ENCODE measurements at regions of chr1 and their contacts with region 1.

Region 1: DNA sequence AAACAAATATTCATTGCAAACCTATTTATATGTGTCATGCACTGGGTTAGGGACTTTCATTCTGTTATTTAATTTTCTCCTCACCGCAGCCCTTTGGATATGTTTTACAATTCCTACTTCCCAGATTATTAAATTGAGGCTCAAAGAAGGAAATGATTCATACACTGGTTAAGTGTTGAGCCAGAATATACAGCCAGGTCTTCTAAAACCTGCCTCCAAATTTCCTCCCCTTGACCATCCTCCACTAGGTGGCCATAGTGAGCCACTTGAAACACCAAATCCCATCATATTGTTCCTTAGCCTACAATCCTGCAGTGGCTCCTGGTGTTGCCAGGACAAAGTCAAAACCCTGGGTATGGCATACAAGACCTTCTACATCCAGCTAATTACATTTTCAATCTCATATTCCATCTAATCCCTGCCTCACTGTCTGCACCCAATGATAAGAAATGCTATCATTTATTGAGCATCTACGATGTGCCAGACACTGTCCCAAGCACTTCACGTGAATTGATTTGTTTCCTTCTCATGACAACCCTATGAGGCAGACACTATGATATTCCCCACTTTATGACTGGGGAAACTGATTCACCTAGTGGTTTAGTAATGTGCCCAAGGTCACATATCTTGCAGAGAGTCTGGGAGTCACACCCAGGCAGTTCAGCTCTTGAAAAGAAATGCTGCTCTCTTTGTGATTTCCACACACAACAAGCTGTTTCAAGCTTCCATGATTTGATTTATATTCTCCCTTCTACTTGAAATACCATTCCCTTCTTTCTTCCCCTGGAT is 23.6 kb upstream of the KIRREL1 start:
- DNase-seq: peak; percentile 95
- ATAC-seq: peak; percentile 80
- H3K4me3 ChIP-seq: peak overlapping the region; percentile 20; the same call in 1 of the 2 replicates
- H3K27ac ChIP-seq: peak overlapping the region; percentile 86
- H3K4me1 ChIP-seq: peaks cover 18% of the 10 kb centered on the region
- H3K27me3 ChIP-seq: 0 out of 2 replicates have a peak, but pooled peaks cover under 1% of the 10 kb centered on the region
- CTCF ChIP-seq: peak; percentile 97

Region 2: GRCh38 chr1:157348538-157349480 is 621.1 kb before region 1 on chr1:
- CTCF ChIA-PET with region 1: no interaction called
- POLR2A ChIA-PET with region 1: no interaction called
- intact Hi-C with region 1: no loop called
- DNase-seq: no peak
- ATAC-seq: no peak
- H3K4me3 ChIP-seq: no peak overlapping the region
- H3K27ac ChIP-seq: no peak overlapping the region
- H3K4me1 ChIP-seq: no peaks in the 10 kb centered on the region
- H3K27me3 ChIP-seq: peaks cover 21% of the 10 kb centered on the region
- CTCF ChIP-seq: no peak

Region 3: GRCh38 chr1:157849229-157849875 is 120.5 kb before region 1 on chr1:
- CTCF ChIA-PET with region 1: no interaction called
- POLR2A ChIA-PET with region 1: no interaction called
- intact Hi-C with region 1: no loop called
- DNase-seq: no peak
- ATAC-seq: no peak
- H3K4me3 ChIP-seq: no peak overlapping the region
- H3K27ac ChIP-seq: no peak overlapping the region
- H3K4me1 ChIP-seq: no peaks in the 10 kb centered on the region
- H3K27me3 ChIP-seq: peaks cover 39% of the 10 kb centered on the region
- CTCF ChIP-seq: no peak

Region 4: GRCh38 chr1:157910270-157910669 is 59.6 kb before region 1 on chr1:
- CTCF ChIA-PET with region 1: no interaction called
- POLR2A ChIA-PET with region 1: no interaction called
- intact Hi-C with region 1: no loop called
- DNase-seq: no peak
- ATAC-seq: no peak
- H3K4me3 ChIP-seq: no peak overlapping the region
- H3K27ac ChIP-seq: no peak overlapping the region
- H3K4me1 ChIP-seq: no peaks in the 10 kb centered on the region
- H3K27me3 ChIP-seq: peaks cover 18% of the 10 kb centered on the region
- CTCF ChIP-seq: no peak

Region 5: DNA sequence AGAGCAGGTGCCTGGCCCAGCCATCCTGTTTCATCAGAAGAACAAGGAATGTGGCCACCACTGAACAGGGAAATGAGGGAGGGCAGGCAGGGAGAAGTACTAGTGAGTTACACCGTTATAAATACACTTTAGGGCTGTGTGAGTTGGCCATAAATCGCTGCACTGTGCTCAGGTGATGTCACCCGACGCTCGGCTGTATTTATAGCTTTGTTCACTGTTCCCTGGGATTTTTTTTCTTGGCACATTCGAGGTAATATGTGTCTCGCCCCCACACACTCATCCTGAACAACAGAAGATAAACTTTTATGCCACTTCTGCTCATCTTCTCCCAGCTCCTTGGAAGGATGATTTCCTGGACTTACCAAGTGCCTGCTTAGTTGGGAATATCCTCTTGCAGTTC is 14.6 kb after region 1 on chr1:
- CTCF ChIA-PET with region 1: interaction called, 4 read pairs
- POLR2A ChIA-PET with region 1: no interaction called
- intact Hi-C with region 1: loop called (anchors 2 kb)
- DNase-seq: no peak
- ATAC-seq: peak; percentile 72
- H3K4me3 ChIP-seq: no peak overlapping the region
- H3K27ac ChIP-seq: no peak overlapping the region
- H3K4me1 ChIP-seq: no peaks in the 10 kb centered on the region
- H3K27me3 ChIP-seq: peaks cover 50% of the 10 kb centered on the region; the same call in 1 of the 2 replicates
- CTCF ChIP-seq: no peak

Region 6: DNA sequence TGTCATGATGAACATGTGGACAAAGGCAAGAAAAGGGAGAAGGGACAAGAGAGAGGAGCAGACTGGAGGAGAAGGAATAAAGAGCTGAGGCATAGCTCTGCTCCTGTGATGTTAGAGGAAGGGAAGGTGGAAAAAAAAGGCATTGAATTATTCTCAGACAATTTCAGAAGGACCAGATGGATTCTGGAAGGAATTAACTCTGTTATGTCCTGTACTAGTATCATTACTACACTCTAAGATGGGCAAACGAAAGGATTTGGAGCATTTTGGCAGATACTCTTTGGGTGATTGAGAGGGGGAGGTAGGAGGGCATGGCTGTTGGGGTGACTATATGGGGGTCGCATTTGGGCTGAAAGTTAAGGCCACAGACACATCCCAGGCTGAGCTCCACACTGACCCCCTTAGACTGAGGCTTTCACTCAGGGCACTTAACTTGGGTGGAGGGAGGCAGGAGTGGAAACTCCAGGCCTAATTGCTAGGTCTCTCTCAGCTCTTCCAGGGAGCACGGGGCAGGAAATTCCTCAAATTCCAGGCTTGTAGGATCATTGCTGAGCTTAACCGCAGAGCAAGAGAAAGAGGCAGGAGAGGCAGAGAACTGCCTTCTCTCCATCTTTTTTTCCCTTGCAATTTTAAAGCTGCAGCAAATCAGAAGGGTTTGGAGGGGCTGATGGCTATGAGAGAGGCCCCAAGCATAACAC is 49.4 kb after region 1 on chr1:
- CTCF ChIA-PET with region 1: no interaction called
- POLR2A ChIA-PET with region 1: no interaction called
- intact Hi-C with region 1: loop called (anchors 2 kb)
- DNase-seq: peak; percentile 96
- ATAC-seq: peak; percentile 93
- H3K4me3 ChIP-seq: peak overlapping the region; percentile 42
- H3K27ac ChIP-seq: peak overlapping the region; percentile 72
- H3K4me1 ChIP-seq: peaks cover 66% of the 10 kb centered on the region
- H3K27me3 ChIP-seq: no peaks in the 10 kb centered on the region
- CTCF ChIP-seq: no peak

Region 7: DNA sequence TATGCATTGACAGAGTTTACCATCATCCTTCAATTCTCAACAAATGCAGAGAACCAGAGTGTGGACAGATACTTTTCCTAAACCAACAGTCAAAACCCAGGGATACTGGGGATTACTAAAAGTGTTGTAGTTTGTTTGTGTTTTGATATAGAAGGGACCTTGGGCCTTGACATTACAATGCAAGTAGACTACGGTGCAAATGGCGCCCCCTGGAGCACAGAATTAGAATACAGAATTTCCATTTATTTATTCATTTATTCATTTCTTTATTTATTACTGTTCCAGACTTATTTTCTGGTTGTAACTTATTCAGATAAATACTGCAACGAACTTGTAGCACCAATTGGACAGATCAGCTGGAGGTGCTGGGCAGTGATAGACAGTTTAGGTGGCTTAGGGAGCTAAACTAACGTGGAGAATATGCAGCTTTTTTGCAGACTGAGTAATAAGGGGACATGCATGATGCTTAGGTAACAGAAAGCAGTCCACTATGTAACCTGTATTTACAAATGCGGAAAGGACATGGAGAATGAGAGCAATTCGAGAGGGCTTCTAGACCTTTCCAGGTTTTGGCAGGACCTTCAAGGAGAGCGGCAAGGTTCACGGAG is 66.2 kb after region 1 on chr1:
- CTCF ChIA-PET with region 1: interaction called, 4 read pairs
- POLR2A ChIA-PET with region 1: no interaction called
- intact Hi-C with region 1: loop called (anchors 1 kb)
- DNase-seq: peak; percentile 79
- ATAC-seq: peak; percentile 24; the same call in 1 of the 2 replicates
- H3K4me3 ChIP-seq: no peak overlapping the region
- H3K27ac ChIP-seq: no peak overlapping the region
- H3K4me1 ChIP-seq: peaks cover 22% of the 10 kb centered on the region
- H3K27me3 ChIP-seq: no peaks in the 10 kb centered on the region
- CTCF ChIP-seq: peak; percentile 96

Region 8: GRCh38 chr1:158087320-158087927 is 117.5 kb after region 1 on chr1:
- CTCF ChIA-PET with region 1: no interaction called
- POLR2A ChIA-PET with region 1: no interaction called
- intact Hi-C with region 1: loop called (anchors 1 kb)
- DNase-seq: peak; percentile 87
- ATAC-seq: peak; percentile 87
- H3K4me3 ChIP-seq: no peak overlapping the region
- H3K27ac ChIP-seq: no peak overlapping the region
- H3K4me1 ChIP-seq: no peaks in the 10 kb centered on the region
- H3K27me3 ChIP-seq: no peaks in the 10 kb centered on the region
- CTCF ChIP-seq: peak; percentile 100